ENCODE measurements at regions of chr15 and their contacts with region 1.

Region 1: DNA sequence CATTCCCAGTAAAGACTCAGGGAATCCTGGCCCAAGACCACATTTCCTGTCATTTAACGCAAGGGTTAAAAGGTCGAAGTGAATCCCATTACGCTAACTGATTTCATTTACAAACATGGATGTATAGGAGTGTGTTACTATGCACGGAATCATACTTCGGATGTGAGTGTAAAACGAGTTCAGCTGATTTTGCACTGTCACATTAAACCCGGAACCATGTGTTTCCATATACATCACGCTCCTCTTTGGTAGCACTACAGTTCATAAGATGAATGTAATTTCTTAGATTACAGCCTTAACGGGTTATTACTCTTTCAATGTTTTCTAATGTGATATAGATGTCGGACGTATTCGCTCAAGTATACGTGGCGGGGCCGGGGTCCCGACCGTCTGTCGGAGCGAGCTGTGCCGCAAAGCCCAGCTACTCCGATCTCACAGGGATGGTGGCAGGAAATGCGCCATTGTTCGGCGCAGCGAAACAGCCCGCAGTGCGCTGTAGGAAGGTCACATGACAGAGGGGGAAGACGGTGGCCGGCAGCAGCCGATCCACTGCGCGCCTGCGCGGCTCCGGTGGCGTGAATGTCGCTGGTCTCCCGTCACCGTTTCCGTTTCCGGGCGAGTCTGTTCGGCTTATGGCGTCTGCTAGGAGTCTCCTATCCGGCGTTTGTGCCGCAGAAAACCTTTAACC is 97.3 kb downstream of the NPAP1 start:
- DNase-seq: peak; percentile 35 to 88 (median 74)
- ATAC-seq: peak; percentile 92 to 93
- H3K4me3 Mint-ChIP-seq: peak overlapping the region; percentile 78 to 96 (median 94)
- H3K27ac Mint-ChIP-seq: peak overlapping the region; percentile 80 to 98 (median 95)
- H3K4me1 Mint-ChIP-seq: peaks cover 0 to 9% (median 4%) of the 10 kb centered on the region in 4 donors
- H3K27me3 Mint-ChIP-seq: peaks cover 2 to 29% (median 15%) of the 10 kb centered on the region in 5 donors

Region 2: GRCh38 chr15:24734391-24734790 is 38.4 kb before region 1 on chr15:
- POLR2A ChIA-PET with region 1: no interaction called
- DNase-seq: no peak
- ATAC-seq: no peak
- H3K4me3 Mint-ChIP-seq: no peak overlapping the region
- H3K27ac Mint-ChIP-seq: no peak overlapping the region
- H3K4me1 Mint-ChIP-seq: no peaks in the 10 kb centered on the region
- H3K27me3 Mint-ChIP-seq: no peaks in the 10 kb centered on the region

Region 3: GRCh38 chr15:24956111-24956838 is 183.4 kb after region 1 on chr15:
- POLR2A ChIA-PET with region 1: interaction called, 10 read pairs
- DNase-seq: peak; percentile 65 to 91 (median 71)
- ATAC-seq: peak; percentile 75 to 76
- H3K4me3 Mint-ChIP-seq: peak overlapping the region; percentile 88 to 99 (median 94)
- H3K27ac Mint-ChIP-seq: peak overlapping the region; percentile 93 to 99 (median 97)
- H3K4me1 Mint-ChIP-seq: peaks cover 4 to 29% (median 19%) of the 10 kb centered on the region in 4 donors
- H3K27me3 Mint-ChIP-seq: peaks cover 0 to 2% (median 0%) of the 10 kb centered on the region in 5 donors